ENCODE measurements at regions of chr19 and their contacts with region 1.

Region 1: GRCh38 chr19:35899547-35900214 is 659 bp downstream of the NFKBID start:
- DNase-seq: peak; percentile 94
- ATAC-seq: peak; percentile 54
- H3K4me3 Mint-ChIP-seq: peak overlapping the region; percentile 75
- H3K27ac Mint-ChIP-seq: peak overlapping the region; percentile 94
- H3K4me1 Mint-ChIP-seq: peaks cover 65% of the 10 kb centered on the region
- H3K27me3 Mint-ChIP-seq: no peaks in the 10 kb centered on the region

Region 2: GRCh38 chr19:35618857-35619256 is 280.8 kb before region 1 on chr19:
- CTCF ChIA-PET with region 1: no interaction called
- POLR2A ChIA-PET with region 1: no interaction called
- intact Hi-C with region 1: no loop called
- DNase-seq: no peak
- ATAC-seq: no peak
- H3K4me3 Mint-ChIP-seq: no peak overlapping the region
- H3K27ac Mint-ChIP-seq: no peak overlapping the region
- H3K4me1 Mint-ChIP-seq: peaks cover under 1% of the 10 kb centered on the region
- H3K27me3 Mint-ChIP-seq: no peaks in the 10 kb centered on the region

Region 3: GRCh38 chr19:35748106-35749020 is 151.3 kb before region 1 on chr19 and contains the start of gene LIN37:
- CTCF ChIA-PET with region 1: no interaction called
- POLR2A ChIA-PET with region 1: no interaction called
- intact Hi-C with region 1: loop called in 1 of 2 experiments (anchors 1 kb)
- DNase-seq: peak; percentile 99
- ATAC-seq: peak; percentile 81
- H3K4me3 Mint-ChIP-seq: peak within 1 kb of the TSS; percentile 89
- H3K27ac Mint-ChIP-seq: peak within 1 kb of the TSS; percentile 94
- H3K4me1 Mint-ChIP-seq: peaks cover 40% of the 10 kb centered on the region
- H3K27me3 Mint-ChIP-seq: no peaks in the 10 kb centered on the region
- total RNA-seq, gene LIN37: 8.4 to 12.7 TPM

Region 4: DNA sequence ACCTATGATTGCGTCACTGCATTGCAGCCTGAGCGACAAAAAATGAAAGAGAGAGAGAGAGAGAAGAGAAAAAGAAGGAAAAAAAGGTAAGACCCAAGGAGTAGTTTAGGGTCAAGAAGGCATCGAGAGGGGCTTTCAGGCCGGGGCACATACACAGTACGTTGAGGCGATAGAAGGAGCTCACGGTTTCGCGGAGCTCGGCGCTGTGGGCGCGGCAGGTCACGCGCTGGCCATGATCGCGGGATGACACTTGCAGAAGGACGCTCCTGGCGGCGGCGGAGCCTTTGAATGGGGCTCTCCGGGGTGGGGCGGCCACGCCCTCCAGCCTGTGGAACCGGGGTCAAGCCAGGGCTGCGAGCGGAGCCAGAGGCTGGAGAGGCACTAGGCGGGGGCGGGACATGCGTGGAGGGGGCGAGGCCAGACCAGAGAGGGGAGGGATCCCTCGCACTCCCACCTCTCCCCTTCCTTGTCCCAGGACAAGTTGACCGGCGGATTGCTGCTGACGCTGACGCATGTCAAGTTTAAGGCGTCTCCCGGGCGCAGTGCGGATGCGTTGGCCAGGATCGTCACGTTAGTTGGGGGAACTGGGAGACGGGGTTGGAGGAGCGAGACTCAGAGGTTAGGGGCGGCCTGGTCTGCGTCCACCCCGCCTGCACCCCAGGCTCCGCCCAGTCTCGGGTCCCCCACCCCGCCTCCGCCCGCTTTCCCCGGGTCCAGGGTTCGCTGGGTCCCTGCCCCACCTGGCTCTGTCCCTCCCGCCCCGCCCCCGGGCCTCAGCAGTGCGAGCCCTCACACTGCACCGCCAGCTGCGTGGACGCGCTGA is 54.3 kb before region 1 on chr19:
- CTCF ChIA-PET with region 1: no interaction called
- POLR2A ChIA-PET with region 1: no interaction called
- intact Hi-C with region 1: no loop called
- DNase-seq: peak; percentile 31
- ATAC-seq: peak; percentile 19
- H3K4me3 Mint-ChIP-seq: peak overlapping the region; percentile 6
- H3K27ac Mint-ChIP-seq: no peak overlapping the region
- H3K4me1 Mint-ChIP-seq: peaks cover 16% of the 10 kb centered on the region
- H3K27me3 Mint-ChIP-seq: peaks cover 56% of the 10 kb centered on the region

Region 5: DNA sequence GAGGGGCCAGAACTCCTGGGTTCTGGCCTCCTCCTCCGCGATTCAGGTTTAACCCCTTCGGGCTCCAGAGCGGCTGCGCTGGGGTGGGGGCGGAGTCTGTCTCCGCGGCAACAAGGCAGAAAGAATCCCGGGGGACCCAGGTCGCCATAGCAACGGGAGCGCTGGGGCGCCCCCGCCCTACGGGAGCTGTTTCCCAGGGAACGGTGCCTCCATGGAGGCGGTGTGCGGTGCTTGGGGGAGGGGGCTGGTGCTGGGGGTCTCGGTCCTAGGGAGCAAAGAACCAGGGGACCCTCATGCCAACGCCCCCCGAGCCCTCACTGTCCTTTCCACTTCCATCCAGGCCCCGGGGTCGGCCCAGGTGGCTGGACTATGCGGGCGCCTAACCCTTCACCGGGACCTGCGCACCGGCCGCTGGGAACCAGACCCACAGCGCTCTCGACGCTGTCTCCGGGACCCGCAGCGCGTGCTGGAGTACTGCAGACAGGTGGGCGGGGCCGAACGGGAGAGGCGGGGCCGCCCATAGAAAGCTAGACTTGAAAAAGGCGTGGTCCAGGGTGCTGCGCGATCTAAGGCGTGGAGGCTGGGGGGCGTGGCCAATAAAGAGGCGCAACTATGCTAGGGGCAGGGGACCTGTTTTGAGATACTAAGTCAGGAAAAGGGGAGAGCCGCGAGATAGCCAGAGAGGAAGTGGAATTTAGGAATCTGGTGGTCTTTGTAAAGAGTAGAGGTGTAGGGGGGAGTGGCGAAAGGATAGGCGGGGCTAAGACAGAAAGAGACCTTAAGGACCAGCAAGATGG is 30.2 kb before region 1 on chr19:
- CTCF ChIA-PET with region 1: interaction called, 3 read pairs
- POLR2A ChIA-PET with region 1: no interaction called
- intact Hi-C with region 1: loop called in 1 of 2 experiments (anchors 1 kb)
- DNase-seq: peak; percentile 95
- ATAC-seq: peak; percentile 93
- H3K4me3 Mint-ChIP-seq: peak overlapping the region; percentile 52
- H3K27ac Mint-ChIP-seq: no peak overlapping the region
- H3K4me1 Mint-ChIP-seq: peaks cover 14% of the 10 kb centered on the region
- H3K27me3 Mint-ChIP-seq: peaks cover 37% of the 10 kb centered on the region

Region 6: GRCh38 chr19:35995048-35995993 is 95.6 kb after region 1 on chr19 and contains the start of gene SDHAF1:
- CTCF ChIA-PET with region 1: no interaction called
- POLR2A ChIA-PET with region 1: no interaction called
- intact Hi-C with region 1: loop called in 1 of 2 experiments (anchors 1 kb)
- DNase-seq: peak; percentile 98
- ATAC-seq: peak; percentile 85
- H3K4me3 Mint-ChIP-seq: peak within 1 kb of the TSS; percentile 94
- H3K27ac Mint-ChIP-seq: peak within 1 kb of the TSS; percentile 96
- H3K4me1 Mint-ChIP-seq: peaks cover 34% of the 10 kb centered on the region
- H3K27me3 Mint-ChIP-seq: no peaks in the 10 kb centered on the region
- total RNA-seq, gene SDHAF1: 16.0 to 19.2 TPM

Region 7: GRCh38 chr19:36073121-36073872 is 173.6 kb after region 1 on chr19:
- CTCF ChIA-PET with region 1: no interaction called
- POLR2A ChIA-PET with region 1: no interaction called
- intact Hi-C with region 1: no loop called
- DNase-seq: no peak
- ATAC-seq: no peak
- H3K4me3 Mint-ChIP-seq: no peak overlapping the region
- H3K27ac Mint-ChIP-seq: no peak overlapping the region
- H3K4me1 Mint-ChIP-seq: no peaks in the 10 kb centered on the region
- H3K27me3 Mint-ChIP-seq: no peaks in the 10 kb centered on the region

Measured in activated CD4-positive, alpha-beta T cell treated with anti-CD3 and anti-CD28 coated beads for 36 hours (primary cell).